Pancreas (tissue), 10 donors: ENCODE measurements at regions of chr22 and their contacts with region 1.

Region 1: GRCh38 chr22:37199760-37200108 is 11.7 kb upstream of the C1QTNF6 start:
- DNase-seq: peak in 2 of 6 donors; percentile 30 to 60
- ATAC-seq: peak in 3 of 4 donors; percentile 6 to 35 (median 29)
- H3K4me3 ChIP-seq: peak overlapping the region in 2 of 4 donors; percentile 23 to 80
- H3K27ac ChIP-seq: peak overlapping the region in 3 of 4 donors; percentile 31 to 95 (median 49)
- H3K4me1 ChIP-seq: peaks cover 23 to 24% (median 24%) of the 10 kb centered on the region in 3 donors
- H3K27me3 ChIP-seq: no peaks in the 10 kb centered on the region
- CTCF ChIP-seq: peak in 2 of 4 donors; percentile 5 to 22

Region 2: GRCh38 chr22:37077884-37078485 is 121.7 kb before region 1 on chr22:
- intact Hi-C with region 1: loop called in 2 of 3 experiments (anchors 10 kb)
- DNase-seq: peak in 4 of 6 donors; percentile 26 to 89 (median 61)
- ATAC-seq: peak; percentile 68 to 81 (median 74)
- H3K4me3 ChIP-seq: no peak overlapping the region
- H3K27ac ChIP-seq: no peak overlapping the region
- H3K4me1 ChIP-seq: no peaks in the 10 kb centered on the region
- H3K27me3 ChIP-seq: no peaks in the 10 kb centered on the region
- CTCF ChIP-seq: peak; percentile 70 to 97 (median 88)

Region 3: DNA sequence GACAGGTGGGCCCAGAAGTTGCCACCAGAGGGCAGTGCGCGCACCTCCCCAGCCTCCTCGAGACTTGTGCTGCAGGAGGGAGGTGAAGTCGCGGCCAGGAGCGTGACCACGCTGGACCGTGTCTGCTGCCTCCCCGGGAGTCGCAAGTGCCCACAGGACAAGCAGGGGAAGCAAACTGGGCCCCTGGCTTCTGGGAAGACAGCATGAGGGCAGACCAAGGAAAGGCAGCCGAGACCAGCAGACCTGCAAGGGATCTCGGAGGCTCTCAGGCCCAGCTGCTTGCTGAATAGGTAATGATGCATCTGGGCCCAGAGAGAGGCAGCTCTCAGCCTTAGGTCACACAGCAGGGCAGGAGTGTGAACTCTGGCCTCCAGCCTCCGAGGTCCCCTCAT is 33.1 kb before region 1 on chr22:
- intact Hi-C with region 1: loop called in 1 of 3 experiments (anchors 5 kb)
- DNase-seq: peak; percentile 64 to 93 (median 81)
- ATAC-seq: peak; percentile 86 to 99 (median 97)
- H3K4me3 ChIP-seq: no peak overlapping the region
- H3K27ac ChIP-seq: no peak overlapping the region
- H3K4me1 ChIP-seq: no peaks in the 10 kb centered on the region
- H3K27me3 ChIP-seq: no peaks in the 10 kb centered on the region
- CTCF ChIP-seq: peak; percentile 85 to 92 (median 92)

Region 4: DNA sequence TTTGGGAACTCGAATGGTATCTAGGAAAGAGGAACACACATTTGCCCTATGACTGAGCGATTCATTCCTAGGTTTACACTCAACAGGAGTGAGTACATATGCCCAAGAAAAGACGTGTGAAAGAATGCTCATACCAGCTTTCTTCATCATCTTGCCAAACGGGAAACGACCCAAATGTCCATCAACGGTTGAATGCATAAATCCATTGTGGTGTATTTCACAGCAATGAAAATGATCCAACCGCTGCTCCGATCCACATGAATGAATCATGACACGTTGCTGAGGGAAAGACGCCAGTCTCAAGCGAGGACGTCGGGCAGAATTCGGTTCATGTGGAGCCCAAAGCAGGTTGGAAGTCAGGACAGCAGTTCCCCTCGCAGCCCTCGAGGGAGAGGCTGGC is 154.1 kb after region 1 on chr22:
- intact Hi-C with region 1: no loop called
- DNase-seq: no peak
- ATAC-seq: no peak
- H3K4me3 ChIP-seq: no peak overlapping the region
- H3K27ac ChIP-seq: no peak overlapping the region
- H3K4me1 ChIP-seq: no peaks in the 10 kb centered on the region
- H3K27me3 ChIP-seq: no peaks in the 10 kb centered on the region
- CTCF ChIP-seq: no peak